A673 (cell line): ENCODE measurements at regions of chr6 and their contacts with region 1.

Region 1: DNA sequence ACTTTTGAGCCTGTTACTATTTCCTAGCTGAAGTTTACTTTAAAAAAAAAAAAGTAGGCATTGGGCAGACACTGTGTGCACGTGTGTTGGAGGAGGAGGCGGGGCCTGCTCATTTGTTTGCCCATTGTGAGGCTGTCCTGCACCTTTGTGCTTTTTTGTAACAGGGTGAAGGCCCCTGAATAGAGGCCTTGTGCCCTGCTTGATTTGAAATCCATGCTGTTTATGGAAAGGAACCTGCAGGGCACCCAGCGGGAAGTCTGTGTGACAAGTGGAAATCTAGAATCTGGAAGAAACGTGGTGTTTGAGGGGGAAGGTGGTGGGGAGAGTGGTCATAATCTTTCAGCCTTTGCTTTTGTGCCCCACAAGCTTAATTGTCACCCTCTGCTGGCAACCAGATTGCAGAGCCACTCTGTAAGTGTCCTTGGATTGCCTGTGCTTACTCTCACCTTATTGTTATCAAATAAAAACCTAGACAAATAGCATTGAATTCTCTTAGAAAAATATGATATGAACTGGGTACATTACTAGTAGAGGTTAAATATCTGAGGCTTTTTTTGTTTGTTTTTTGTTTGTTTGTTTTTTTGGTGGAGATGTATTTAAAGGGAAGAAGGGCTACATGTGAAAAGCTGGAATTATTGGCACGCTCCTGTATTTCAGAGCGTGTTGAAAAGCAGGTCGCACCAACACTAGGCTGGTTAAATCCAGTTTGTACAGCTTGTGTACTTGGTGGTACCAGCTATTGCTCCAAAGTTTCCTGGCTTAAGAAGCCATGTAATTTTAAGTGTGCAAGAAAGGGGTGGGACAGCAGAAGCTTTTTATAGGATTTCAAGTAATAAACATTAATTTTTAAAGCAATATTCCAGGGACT is 156.3 kb downstream of the ARID1B start:
- DNase-seq: peak; percentile 39
- H3K4me3 ChIP-seq: no peak overlapping the region
- H3K27ac ChIP-seq: peak overlapping the region; percentile 19
- H3K4me1 ChIP-seq: peaks cover 30% of the 10 kb centered on the region
- H3K27me3 ChIP-seq: no peaks in the 10 kb centered on the region
- CTCF ChIP-seq: peak; percentile 29; the same call in 1 of the 2 replicates

Region 2: GRCh38 chr6:156760377-156760776 is 173.1 kb before region 1 on chr6:
- CTCF ChIA-PET with region 1: no interaction called
- POLR2A ChIA-PET with region 1: interaction called, 20 read pairs
- intact Hi-C with region 1: no loop called
- DNase-seq: no peak
- H3K4me3 ChIP-seq: no peak overlapping the region
- H3K27ac ChIP-seq: no peak overlapping the region
- H3K4me1 ChIP-seq: no peaks in the 10 kb centered on the region
- H3K27me3 ChIP-seq: no peaks in the 10 kb centered on the region
- CTCF ChIP-seq: no peak

Region 3: DNA sequence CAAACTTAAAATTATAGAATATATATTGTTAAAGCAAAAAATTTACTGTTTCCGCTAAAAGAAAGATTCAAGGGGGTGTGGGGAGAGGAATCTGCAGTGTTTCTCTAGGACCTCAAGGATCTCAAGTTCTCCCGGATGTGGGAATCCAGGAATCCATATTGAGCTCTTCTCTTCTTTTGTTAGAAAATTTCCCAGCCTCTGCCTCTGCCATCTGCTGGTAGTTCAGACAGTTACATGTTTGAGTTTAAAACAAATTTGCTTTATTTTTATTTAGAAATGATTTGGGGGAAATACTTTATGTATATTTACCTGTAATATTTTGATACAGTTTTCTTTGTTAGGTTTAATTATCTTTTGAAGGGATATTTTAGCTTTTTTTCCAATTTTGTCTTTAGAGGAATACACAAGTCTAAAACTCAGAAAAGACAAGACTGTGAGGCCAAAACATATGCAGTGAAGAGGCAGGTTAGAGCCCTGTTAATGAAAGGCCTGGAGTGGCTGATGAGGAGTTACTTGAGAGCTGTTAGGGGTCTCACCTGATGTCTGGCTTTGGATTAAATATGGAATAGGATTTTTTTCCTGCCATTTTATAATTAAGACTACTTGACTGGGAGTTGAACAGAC is 112.5 kb after region 1 on chr6:
- CTCF ChIA-PET with region 1: no interaction called
- POLR2A ChIA-PET with region 1: no interaction called
- intact Hi-C with region 1: no loop called
- DNase-seq: peak; percentile 71
- H3K4me3 ChIP-seq: no peak overlapping the region
- H3K27ac ChIP-seq: no peak overlapping the region
- H3K4me1 ChIP-seq: peaks cover 26% of the 10 kb centered on the region
- H3K27me3 ChIP-seq: no peaks in the 10 kb centered on the region
- CTCF ChIP-seq: peak; percentile 76